Right ventricle myocardium inferior (tissue), 1 donor: ENCODE measurements at regions of chr17 and their contacts with region 1.

Region 1: DNA sequence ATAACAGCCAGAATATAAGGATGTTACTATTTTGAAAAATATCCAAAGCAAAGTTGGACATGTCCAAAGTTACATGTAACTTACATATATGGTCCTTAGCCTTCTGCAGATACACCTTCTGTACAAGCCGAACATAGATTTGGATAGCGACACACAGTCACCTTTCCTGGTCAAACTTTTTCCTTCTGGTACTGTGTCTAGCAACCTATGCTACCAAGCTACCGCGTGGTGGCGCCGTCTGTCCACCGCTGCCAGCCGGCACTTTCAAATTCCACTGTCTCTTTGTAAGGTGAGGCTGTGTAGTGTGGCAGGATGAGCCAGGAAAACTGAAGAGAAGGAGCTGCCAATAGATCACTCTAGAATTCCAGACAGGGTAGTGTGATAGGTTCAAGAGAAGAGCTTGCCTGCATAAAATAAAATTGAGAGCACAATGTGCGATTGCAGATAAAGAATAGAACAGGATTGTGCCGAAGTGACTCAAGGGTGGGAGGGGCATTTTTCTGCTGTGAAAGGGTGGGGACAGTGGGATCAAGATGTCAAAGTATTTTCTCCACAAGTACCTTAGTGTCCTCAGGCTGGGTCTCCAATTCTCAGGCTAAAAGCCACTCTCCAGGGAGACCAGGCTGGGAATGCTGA is 366.9 kb downstream of the SLC39A11 start:
- DNase-seq: no peak
- ATAC-seq: peak; percentile 72

Region 2: GRCh38 chr17:72556944-72557826 is 168.4 kb before region 1 on chr17:
- intact Hi-C with region 1: loop called (anchors 5 kb)
- DNase-seq: no peak
- ATAC-seq: peak; percentile 53

Region 3: DNA sequence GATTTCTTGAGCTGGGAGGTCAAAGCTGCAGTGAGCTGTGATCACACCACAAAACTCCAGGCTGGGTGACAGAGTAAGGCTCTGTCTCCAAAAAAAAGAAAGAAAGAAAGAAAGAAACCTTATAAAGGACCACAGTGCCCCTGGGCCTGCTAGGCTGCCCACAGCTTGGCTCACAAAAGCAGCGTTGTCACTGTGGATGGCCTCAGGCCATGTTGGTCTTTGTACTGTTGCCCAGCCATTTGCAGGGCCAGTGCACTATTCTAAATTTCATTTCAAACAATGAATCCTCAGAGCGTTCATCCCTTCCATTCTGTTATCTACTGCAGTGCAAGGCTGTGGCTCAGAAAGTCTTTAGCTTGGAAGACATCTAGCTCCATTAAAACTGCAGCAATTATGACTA is 158.5 kb after region 1 on chr17:
- intact Hi-C with region 1: no loop called
- DNase-seq: no peak
- ATAC-seq: no peak

Region 4: DNA sequence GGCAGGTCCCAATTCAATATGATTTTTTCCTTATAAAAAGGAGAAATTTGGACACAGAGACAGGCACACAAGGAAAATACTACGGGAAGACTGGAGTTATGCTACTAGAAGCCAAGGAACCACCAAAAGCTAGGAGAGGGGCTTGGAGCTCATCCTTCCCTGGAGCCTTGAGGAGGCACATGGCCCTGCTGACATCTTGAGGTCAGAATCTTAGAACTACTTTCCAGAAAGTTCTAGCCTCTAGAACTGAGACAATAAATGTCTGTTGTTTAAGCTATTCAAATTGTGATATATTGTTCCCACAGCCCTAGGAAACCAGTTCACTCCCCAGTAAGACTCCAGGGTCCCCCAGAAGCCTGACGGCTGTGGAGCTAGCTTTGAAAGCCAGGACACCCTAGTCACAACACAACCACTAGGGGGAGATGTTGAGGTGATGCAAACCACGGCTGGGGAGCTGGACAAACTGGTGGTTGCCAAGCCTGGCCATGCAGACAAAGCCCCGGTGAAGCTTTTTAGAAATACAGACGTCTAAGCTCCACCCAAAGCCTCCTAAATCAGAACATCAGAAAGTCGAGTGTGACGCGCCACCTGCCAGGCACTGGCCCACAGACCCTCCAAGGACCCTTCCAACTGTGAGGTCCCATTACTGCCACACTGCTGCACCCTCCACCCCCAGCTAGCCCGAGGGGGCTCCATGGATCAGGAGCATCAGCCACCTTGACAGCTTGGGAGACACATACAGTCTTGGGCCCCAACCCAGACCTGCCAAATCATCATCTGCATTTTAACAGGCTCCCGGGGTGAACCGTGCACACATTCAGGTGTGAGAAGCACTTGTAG is 260.6 kb after region 1 on chr17:
- intact Hi-C with region 1: loop called (anchors 10 kb)
- DNase-seq: no peak
- ATAC-seq: peak; percentile 85

Region 5: DNA sequence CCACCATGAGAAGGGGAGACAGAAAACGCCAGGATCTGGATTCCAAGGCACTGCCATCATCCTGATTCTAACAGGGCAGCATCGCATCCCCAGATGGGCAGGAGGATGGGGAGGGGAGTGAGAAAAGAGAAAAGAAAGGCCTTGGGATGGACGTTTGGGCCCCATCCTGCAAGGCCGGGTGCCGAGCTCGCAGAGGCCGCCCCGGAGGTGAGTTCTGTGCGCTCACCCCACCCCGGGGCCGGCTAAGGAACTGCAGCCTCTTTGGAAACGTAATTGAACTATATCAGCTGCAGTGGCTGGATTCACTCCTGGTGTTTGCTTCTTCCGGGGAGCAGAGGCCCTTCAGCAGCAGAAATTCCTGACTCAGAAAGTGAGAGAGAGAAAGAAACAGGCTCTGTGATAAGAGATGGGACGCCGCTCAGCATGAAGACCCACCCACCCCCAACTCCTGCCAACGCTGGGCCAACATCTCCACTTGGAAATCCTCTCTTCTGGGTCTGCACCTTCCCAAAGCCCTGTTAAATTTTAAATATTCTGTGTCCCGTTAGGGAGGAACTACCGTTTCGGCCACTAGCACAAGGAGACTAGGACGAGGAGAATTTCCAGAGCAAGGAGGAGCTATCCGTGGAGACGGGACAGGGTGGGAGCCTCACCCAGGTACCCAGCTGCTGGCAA is 430.8 kb after region 1 on chr17:
- intact Hi-C with region 1: loop called (anchors 1 kb)
- DNase-seq: peak; percentile 87
- ATAC-seq: peak; percentile 94

Region 6: GRCh38 chr17:73192894-73193701 is 467.5 kb after region 1 on chr17 and contains the start of gene COG1:
- intact Hi-C with region 1: loop called (anchors 5 kb)
- DNase-seq: peak; percentile 94
- ATAC-seq: peak; percentile 88
- total RNA-seq, gene COG1: 49.3 TPM

Region 7: DNA sequence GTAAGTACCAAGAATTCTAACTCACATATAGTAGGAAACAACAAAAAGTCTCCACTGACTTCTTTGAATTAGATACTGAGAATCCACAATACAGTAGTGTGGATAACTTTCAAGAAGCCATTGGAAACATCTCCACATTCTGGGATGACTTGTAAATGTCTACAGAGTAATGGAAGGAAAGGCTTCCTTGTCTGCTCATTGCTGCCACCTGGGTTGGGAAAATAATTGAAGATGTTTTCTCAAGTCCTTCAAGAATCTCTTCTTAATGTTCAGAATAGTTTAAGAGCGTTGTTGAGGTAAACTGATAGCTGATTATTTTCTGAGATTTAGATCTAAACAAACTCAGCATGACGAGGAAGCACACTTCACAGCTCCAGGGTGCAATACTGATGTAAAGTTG is 522.2 kb after region 1 on chr17:
- intact Hi-C with region 1: loop called (anchors 5 kb)
- DNase-seq: no peak
- ATAC-seq: no peak

Region 8: DNA sequence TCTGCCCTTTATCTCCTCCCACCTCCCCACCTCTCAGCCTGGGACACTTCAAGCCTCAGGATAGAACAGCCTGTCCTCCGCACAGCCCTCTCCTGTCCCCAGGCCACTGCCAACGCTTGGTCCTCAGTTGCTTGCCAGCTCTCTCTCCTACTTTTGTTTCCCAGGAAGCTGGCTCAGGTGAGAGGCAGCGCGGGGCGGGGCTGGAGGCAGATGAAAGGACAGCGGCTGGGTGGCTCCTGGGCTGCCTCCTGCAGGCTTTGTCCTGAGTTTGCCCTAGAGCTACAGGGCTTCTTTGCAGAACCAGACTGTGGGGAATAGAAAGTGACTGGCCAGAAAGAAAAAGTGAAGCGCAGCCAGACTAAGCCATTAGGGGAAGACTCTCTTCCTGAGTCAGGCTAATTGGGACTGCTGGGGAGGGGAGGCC is 634.4 kb after region 1 on chr17:
- intact Hi-C with region 1: loop called (anchors 10 kb)
- DNase-seq: peak; percentile 80
- ATAC-seq: peak; percentile 74